ENCODE measurements at regions of chr3 and their contacts with region 1.

Region 1: DNA sequence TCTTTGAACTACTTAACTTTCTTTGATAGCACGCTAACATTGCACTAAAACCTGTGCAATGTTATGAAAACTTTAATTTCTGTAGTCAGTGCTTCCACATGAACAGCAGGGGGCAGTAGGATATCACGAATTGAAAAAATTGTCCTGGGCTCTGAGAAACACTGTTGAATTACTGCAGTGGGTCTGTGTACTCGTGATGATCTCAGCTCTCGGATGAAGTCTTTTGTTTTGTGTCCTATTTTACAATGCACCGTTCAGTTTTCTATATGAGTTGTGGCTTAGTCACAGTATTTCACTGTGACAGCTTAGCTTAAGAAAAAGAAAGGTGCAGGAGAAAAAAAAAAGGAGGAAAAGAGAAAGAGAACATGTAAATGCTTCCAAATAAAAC is 141.3 kb upstream of the CCDC54 start:
- DNase-seq: peak; percentile 64
- H3K4me3 Mint-ChIP-seq: peak overlapping the region; percentile 96
- H3K27ac Mint-ChIP-seq: peak overlapping the region; percentile 90
- H3K4me1 Mint-ChIP-seq: peaks cover 9% of the 10 kb centered on the region
- H3K27me3 Mint-ChIP-seq: no peaks in the 10 kb centered on the region
- CTCF ChIP-seq: peak; percentile 61

Region 2: DNA sequence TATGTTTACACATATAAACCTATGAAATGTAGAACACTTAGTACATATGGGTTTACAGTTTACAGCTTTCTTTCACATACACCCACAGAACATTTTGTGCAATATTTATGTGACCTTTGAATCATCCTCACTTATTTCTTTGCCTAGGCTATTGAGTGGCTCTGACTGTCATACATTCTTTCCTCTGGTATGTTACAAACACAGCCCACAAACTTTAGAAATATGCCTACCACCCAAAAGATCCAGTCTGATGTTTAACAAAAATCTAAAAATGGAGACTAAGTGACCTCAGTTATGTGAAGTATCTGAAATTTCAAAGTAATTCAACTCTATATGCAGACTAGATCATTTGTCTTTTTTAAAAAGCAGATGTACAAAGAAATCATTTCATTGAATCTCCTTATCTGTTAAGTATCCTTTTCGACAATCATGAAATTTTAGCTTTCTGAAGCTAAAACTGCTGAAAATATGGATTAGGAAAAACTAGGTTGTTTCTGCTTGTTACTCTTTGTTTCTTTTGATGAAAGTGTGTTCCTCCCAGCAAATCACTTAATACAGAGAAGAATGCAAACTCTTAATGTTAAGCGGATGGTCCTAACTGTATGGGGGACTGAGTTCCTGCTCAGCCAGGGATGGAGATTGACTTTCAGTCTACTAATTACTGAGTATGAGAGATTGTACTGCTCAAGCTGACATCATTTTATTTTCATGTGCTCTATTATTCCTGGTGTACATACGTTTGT is 169.0 kb after region 1 on chr3:
- CTCF ChIA-PET with region 1: no interaction called
- intact Hi-C with region 1: no loop called
- DNase-seq: no peak
- H3K4me3 Mint-ChIP-seq: no peak overlapping the region
- H3K27ac Mint-ChIP-seq: no peak overlapping the region
- H3K4me1 Mint-ChIP-seq: peaks cover 8% of the 10 kb centered on the region
- H3K27me3 Mint-ChIP-seq: no peaks in the 10 kb centered on the region
- CTCF ChIP-seq: no peak

Region 3: DNA sequence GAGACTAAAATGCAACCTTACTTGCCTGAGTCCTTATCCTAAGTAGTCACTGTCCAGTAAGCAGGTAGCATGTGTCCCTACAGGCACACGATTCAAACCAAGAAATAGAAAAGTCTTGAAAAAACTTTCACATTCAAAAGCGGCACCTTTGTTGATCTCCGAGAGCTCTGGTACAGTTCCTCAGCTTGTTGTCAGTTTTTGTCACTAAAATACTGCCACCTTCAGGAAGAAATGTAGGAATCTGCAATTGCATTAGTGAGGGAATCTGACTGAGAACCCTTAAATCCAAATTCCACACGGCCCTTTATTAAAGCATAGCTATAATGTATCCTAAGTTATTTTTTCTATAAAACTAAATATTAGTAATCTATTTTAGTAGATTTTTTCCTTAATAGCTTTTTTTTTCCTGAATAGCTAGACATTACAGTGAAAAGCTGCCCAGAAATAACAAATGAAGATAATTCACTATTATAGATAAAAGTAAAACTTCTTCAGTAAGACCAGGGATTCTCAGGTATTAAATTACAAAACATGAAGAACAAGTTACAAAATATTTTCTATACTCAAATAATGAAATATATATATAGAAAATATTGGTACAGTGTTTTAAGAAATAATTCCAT is 185.4 kb after region 1 on chr3:
- CTCF ChIA-PET with region 1: interaction called, 14 read pairs
- intact Hi-C with region 1: no loop called
- DNase-seq: peak; percentile 28
- H3K4me3 Mint-ChIP-seq: peak overlapping the region; percentile 59
- H3K27ac Mint-ChIP-seq: peak overlapping the region; percentile 17
- H3K4me1 Mint-ChIP-seq: peaks cover 20% of the 10 kb centered on the region
- H3K27me3 Mint-ChIP-seq: no peaks in the 10 kb centered on the region
- CTCF ChIP-seq: peak; percentile 29

Region 4: GRCh38 chr3:107522510-107523288 is 286.8 kb after region 1 on chr3 and contains the start of gene BBX:
- CTCF ChIA-PET with region 1: no interaction called
- intact Hi-C with region 1: loop called (anchors 5 kb)
- DNase-seq: peak; percentile 90
- H3K4me3 Mint-ChIP-seq: peak within 1 kb of the TSS; percentile 98
- H3K27ac Mint-ChIP-seq: peak within 1 kb of the TSS; percentile 94
- H3K4me1 Mint-ChIP-seq: no peaks in the 10 kb centered on the region
- H3K27me3 Mint-ChIP-seq: no peaks in the 10 kb centered on the region
- CTCF ChIP-seq: no peak
- total RNA-seq, gene BBX: 66.9 and 72.2 TPM in 2 replicates

Region 5: GRCh38 chr3:107574650-107575049 is 338.7 kb after region 1 on chr3:
- CTCF ChIA-PET with region 1: no interaction called
- intact Hi-C with region 1: loop called (anchors 5 kb)
- DNase-seq: no peak
- H3K4me3 Mint-ChIP-seq: no peak overlapping the region
- H3K27ac Mint-ChIP-seq: no peak overlapping the region
- H3K4me1 Mint-ChIP-seq: no peaks in the 10 kb centered on the region
- H3K27me3 Mint-ChIP-seq: no peaks in the 10 kb centered on the region
- CTCF ChIP-seq: peak; percentile 29

Region 6: DNA sequence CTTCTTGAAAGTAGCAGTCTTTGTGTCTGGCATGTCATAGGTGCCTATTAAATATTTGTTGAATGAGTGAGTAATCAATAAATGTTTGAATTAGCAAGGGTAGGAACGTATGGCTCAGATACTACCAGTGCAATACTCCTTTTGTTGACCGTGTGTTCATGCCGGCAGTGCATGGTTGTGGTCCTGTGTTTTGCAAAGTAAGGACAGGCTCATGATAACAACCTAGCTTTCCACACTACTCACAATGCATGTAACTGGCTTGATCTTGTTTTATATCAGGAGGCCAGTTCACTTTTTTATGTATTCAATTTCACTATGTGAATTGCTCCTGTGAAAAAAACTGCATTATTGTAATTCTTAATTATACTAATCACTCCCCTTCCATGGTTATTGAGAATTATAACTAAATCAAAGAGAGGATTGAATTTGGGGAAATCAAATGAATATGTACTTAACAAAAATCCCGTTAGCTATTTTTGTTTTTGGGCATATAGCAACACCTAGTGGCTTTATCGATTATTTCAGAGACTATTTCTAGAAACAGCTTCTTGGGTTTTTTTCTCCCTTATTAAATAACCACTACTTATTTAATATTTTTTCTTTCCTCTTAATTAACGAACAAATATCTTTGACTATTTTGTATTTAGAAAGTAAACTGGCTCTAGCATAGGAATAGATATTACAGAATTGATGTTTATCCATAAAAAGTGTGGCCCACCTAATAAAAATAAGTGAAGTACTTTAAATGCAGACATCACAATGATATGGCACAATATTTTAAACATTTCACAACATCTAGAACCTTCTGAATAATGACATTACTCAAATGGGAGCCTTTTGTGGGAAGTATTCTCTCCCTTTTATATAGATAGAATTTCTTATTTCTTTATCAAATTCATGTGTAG is 505.3 kb after region 1 on chr3:
- CTCF ChIA-PET with region 1: no interaction called
- intact Hi-C with region 1: loop called (anchors 5 kb)
- DNase-seq: no peak
- H3K4me3 Mint-ChIP-seq: no peak overlapping the region
- H3K27ac Mint-ChIP-seq: no peak overlapping the region
- H3K4me1 Mint-ChIP-seq: no peaks in the 10 kb centered on the region
- H3K27me3 Mint-ChIP-seq: no peaks in the 10 kb centered on the region
- CTCF ChIP-seq: no peak

Region 7: GRCh38 chr3:107846279-107846852 is 610.4 kb after region 1 on chr3:
- CTCF ChIA-PET with region 1: no interaction called
- intact Hi-C with region 1: loop called (anchors 5 kb)
- DNase-seq: peak; percentile 74
- H3K4me3 Mint-ChIP-seq: no peak overlapping the region
- H3K27ac Mint-ChIP-seq: no peak overlapping the region
- H3K4me1 Mint-ChIP-seq: peaks cover 11% of the 10 kb centered on the region
- H3K27me3 Mint-ChIP-seq: no peaks in the 10 kb centered on the region
- CTCF ChIP-seq: peak; percentile 67

Region 8: GRCh38 chr3:107927361-107928083 is 691.6 kb after region 1 on chr3:
- CTCF ChIA-PET with region 1: no interaction called
- intact Hi-C with region 1: loop called (anchors 5 kb)
- DNase-seq: peak; percentile 80
- H3K4me3 Mint-ChIP-seq: peak overlapping the region; percentile 80
- H3K27ac Mint-ChIP-seq: no peak overlapping the region
- H3K4me1 Mint-ChIP-seq: no peaks in the 10 kb centered on the region
- H3K27me3 Mint-ChIP-seq: no peaks in the 10 kb centered on the region
- CTCF ChIP-seq: peak; percentile 79